Activated CD4-positive, alpha-beta T cell treated with anti-CD3 and anti-CD28 coated beads for 36 hours (primary cell): ENCODE measurements at regions of chr12 and their contacts with region 1.

Region 1: DNA sequence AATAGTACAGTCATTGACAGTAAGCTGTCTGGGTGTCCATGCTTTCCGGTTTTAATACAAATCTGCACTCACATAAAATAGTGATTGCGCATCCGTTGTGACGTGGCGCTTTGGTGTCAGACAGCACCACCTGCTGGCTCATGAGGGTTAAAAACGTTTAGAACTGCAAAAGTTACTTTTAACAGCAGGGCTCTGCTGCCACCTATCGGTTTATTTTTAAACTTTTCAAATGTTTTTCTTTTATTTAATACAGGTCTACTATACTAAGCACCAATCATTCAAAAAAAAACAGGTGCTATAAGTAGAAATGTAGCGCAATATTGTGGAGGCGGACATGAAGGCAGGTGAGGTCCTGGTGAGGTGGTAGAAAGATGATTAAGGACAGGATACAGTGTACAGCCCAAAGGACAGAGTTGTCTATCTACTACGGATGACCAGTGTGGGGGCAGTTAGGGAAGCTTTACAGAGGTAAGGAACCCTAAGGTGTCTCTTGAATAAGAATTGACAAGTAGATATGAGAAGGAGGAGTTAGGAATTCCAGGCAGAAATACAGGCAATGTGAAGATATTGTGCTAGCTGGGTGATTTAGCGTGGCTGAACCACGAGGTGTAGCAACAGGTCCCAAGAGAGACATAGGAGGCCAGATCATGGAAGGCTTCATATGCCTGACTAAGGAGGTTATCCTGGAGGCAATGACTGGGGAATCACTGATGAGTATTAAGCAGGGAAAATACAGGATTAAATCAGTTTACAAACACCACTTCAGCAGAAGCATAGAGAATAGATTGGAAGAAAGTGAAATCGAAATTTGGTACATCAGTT is 91.5 kb upstream of the PRB2 start:
- DNase-seq: peak; percentile 90
- ATAC-seq: peak; percentile 86
- H3K4me3 Mint-ChIP-seq: no peak overlapping the region
- H3K27ac Mint-ChIP-seq: no peak overlapping the region
- H3K4me1 Mint-ChIP-seq: peaks cover 5% of the 10 kb centered on the region
- H3K27me3 Mint-ChIP-seq: no peaks in the 10 kb centered on the region

Region 2: DNA sequence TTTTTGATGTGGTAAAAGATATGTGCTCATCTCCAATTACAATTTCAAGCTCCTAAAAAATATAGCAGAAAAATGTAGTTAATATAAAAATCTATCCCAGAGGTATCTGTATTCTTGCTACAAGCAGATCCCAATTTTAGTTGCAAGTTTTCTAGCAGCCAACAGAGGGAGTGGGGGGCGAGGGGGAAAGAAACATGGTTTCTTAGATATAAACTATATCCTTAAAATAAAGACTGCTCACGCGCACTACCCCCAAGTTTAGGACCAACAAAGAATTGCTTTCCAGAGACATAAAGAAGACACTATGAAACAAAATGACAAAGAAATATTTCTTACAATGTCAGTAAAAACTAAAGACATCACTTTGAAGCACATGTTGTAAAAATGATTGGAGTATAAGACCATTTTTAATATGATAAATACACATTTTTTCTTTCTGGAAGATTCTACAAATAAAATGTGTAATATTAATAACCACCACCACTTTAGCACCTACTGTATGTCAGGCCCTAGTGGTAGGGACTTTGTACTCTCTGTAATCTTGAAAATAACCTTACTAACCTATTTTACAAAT is 878.9 kb before region 1 on chr12:
- CTCF ChIA-PET with region 1: interaction called, 3 read pairs
- POLR2A ChIA-PET with region 1: no interaction called
- intact Hi-C with region 1: loop called in 1 of 2 experiments (anchors 2 kb)
- DNase-seq: peak; percentile 29
- ATAC-seq: no peak
- H3K4me3 Mint-ChIP-seq: no peak overlapping the region
- H3K27ac Mint-ChIP-seq: no peak overlapping the region
- H3K4me1 Mint-ChIP-seq: peaks cover 25% of the 10 kb centered on the region
- H3K27me3 Mint-ChIP-seq: no peaks in the 10 kb centered on the region

Region 3: GRCh38 chr12:10779103-10779502 is 707.7 kb before region 1 on chr12:
- CTCF ChIA-PET with region 1: interaction called, 99 read pairs
- POLR2A ChIA-PET with region 1: no interaction called
- intact Hi-C with region 1: no loop called
- DNase-seq: no peak
- ATAC-seq: no peak
- H3K4me3 Mint-ChIP-seq: no peak overlapping the region
- H3K27ac Mint-ChIP-seq: no peak overlapping the region
- H3K4me1 Mint-ChIP-seq: no peaks in the 10 kb centered on the region
- H3K27me3 Mint-ChIP-seq: peaks cover 4% of the 10 kb centered on the region

Region 4: GRCh38 chr12:11202811-11203210 is 284.0 kb before region 1 on chr12:
- CTCF ChIA-PET with region 1: interaction called, 5 read pairs
- POLR2A ChIA-PET with region 1: no interaction called
- intact Hi-C with region 1: loop called (anchors 1 to 2 kb)
- DNase-seq: no peak
- ATAC-seq: no peak
- H3K4me3 Mint-ChIP-seq: no peak overlapping the region
- H3K27ac Mint-ChIP-seq: no peak overlapping the region
- H3K4me1 Mint-ChIP-seq: no peaks in the 10 kb centered on the region
- H3K27me3 Mint-ChIP-seq: no peaks in the 10 kb centered on the region